Activated naive CD4-positive, alpha-beta T cell treated with anti-CD3 and anti-CD28 coated beads, Interleukin-2, amount 10 ng/mL, durations not matched to agents 7 days and 5 days (primary cell): ENCODE measurements at regions of chr5 and their contacts with region 1.

Region 1: DNA sequence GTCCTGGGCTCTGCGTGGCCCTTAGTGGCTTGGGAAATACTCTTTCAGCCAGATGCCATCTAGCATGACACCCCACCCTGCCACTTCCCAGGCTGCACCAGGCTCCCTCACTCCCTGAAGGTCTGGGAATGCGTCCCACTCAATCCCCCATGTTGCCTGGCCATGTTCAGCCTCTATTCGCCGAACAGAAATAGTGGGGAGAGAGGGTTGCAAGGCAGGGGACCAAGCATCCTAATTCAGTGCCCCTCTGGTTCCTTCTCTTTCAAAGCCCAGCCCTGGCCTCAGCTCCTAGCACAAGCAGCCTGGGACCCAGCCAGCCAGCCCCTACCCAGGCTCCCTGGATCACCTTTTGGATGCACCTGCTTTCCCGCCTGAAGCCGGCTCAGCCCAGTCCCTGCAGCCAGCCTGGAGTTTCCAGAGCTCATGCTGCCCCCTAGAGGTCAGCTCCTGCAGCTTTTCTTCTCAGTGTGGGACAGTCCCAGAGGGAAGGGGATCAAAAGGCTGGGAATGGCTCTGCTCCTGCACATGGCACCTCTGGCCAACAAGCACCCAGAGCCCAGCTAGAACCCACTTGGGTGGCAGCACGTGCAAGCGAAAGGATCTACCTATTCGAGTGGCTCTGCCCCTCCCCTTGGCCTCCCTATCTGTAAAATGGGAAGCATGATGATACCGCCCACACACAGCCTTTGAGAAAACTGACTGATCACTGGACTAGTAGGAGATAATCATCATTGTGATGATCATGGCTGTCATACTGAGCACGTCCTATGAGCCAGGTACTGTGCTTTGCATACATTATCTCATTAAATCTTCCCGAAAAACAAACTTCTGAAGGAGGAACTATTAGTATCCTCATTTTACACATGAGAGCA is 48.7 kb upstream of the C5orf58 start:
- DNase-seq: peak; percentile 60
- H3K4me3 Mint-ChIP-seq: no peak overlapping the region
- H3K27ac Mint-ChIP-seq: no peak overlapping the region
- H3K4me1 Mint-ChIP-seq: no peaks in the 10 kb centered on the region
- H3K27me3 Mint-ChIP-seq: peaks cover 32% of the 10 kb centered on the region

Region 2: DNA sequence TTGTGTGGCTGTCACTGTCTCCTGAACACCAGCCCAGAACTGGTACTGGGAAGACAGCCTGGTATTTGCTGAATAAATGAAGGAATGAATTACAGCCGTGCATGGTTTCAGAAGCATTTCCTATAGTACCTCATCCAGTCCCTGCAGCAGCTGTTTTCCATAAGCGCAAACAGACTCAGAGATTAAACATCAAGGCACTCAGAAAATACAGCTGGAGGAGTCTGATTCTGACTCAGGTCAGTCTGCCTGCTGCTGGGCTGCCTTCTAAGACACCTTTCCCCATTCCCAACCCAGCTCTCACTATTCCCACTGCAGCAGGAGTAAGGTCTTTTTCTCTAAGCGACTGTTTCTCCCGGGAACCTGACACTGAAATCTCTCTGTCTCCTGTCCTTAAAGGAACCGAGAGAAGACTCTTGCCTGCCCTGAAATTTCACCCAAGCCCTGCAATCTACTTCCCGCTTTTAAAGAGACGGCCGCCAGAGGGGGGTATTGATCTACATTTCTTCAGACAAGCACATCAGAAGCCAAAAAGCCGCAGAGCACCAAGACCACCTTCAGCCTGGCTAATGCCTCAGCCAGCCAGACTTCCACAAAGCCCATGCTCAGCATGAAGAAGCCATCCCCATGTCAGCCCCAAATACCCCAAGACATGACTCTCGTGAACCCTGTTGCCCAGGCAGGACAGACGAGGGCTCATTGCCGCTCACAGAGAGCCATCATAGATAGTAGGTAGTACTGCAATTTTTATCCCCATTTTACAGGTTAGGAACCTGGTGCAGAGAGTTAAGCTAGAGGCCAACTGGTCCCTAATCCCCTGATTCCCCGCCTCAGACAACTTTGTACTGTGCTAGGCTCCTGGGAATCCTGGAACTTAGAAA is 83.7 kb before region 1 on chr5:
- CTCF ChIA-PET with region 1: interaction called, 34 read pairs
- DNase-seq: peak; percentile 81
- H3K4me3 Mint-ChIP-seq: no peak overlapping the region
- H3K27ac Mint-ChIP-seq: no peak overlapping the region
- H3K4me1 Mint-ChIP-seq: no peaks in the 10 kb centered on the region
- H3K27me3 Mint-ChIP-seq: peaks cover 38% of the 10 kb centered on the region

Region 3: GRCh38 chr5:170195961-170196360 is 11.9 kb after region 1 on chr5:
- CTCF ChIA-PET with region 1: interaction called, 23 read pairs
- DNase-seq: no peak
- H3K4me3 Mint-ChIP-seq: no peak overlapping the region
- H3K27ac Mint-ChIP-seq: no peak overlapping the region
- H3K4me1 Mint-ChIP-seq: no peaks in the 10 kb centered on the region
- H3K27me3 Mint-ChIP-seq: peaks cover 26% of the 10 kb centered on the region